ENCODE measurements at regions of chr1 and their contacts with region 1.

Region 1: DNA sequence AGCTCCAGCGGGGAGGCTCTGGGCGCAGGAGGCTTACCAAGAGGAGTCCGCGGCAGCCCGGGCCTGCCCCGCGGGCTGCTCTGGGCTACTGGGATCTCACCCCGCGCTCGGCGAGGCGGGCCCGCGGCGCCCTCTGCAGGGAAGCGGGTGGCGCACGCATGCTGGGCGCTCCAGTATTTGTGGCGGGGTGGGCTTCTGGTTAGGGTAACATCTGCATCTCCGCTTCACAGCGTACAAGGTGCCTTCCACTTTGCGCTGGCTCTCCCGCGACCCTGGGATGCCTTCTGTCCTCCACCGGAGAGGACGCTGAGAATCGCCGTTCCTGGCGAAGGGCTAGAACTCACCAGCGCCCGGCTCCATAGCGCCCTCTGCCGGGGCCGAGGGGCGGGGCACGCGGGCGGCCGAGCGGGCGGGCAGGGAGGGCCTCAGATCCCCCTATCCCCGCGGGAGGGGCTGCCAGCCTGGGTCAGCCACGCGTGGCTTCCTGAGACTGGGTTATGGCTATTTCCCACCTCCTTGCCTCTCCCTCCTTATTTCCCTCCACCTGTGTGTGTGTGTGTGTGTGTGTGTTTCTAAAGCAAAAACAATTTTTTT is 46.6 kb upstream of the CTBS start:
- DNase-seq: no peak
- H3K4me3 ChIP-seq: peak overlapping the region; percentile 39 to 75 (median 56)
- H3K27ac ChIP-seq: peak overlapping the region; percentile 41 to 72 (median 58)
- H3K4me1 ChIP-seq: peaks cover 4 to 24% (median 16%) of the 10 kb centered on the region in 3 donors
- H3K27me3 ChIP-seq: peaks cover 0 to 7% (median 0%) of the 10 kb centered on the region in 4 donors
- CTCF ChIP-seq: peak; percentile 76 to 97 (median 88)
- POLR2A ChIP-seq: no peak

Region 2: GRCh38 chr1:84133479-84133878 is 487.3 kb before region 1 on chr1:
- intact Hi-C with region 1: loop called (anchors 10 kb)
- DNase-seq: no peak
- H3K4me3 ChIP-seq: no peak overlapping the region
- H3K27ac ChIP-seq: no peak overlapping the region
- H3K4me1 ChIP-seq: no peaks in the 10 kb centered on the region
- H3K27me3 ChIP-seq: no peaks in the 10 kb centered on the region
- CTCF ChIP-seq: no peak
- POLR2A ChIP-seq: no peak